CD4-positive, alpha-beta memory T cell (primary cell): ENCODE measurements at regions of chr12 and their contacts with region 1.

Region 1: DNA sequence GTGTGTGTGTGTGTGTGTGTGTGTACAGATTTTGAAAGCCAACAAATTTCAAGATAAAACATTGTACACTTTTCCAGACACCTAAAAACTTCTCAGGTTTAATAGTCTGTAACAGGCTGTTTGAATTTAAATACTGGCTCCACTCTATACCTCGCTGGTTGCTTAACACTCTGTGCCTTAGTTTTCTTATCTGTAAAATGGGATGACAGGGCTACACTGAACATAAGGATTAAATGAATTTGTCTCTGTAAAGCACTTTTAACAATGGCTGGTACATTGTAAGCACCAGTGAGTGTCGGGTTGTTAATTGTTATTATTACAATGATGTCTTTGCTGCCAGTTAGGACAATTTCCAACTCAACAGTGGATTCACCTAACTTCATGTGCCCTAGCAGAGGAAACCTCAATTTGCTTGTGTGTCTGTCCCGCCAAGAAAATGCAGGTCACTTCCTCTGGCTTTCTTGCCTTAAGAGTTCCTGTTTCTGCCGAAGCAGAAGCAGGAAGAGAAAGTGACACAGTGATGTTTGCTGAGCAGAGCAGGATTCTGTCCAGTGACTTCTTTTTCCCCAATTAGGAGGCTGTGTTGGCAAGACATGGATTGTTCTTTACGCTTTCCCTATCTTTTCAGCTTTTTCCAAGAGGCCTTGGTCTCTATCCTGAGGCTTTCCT is 154.0 kb upstream of the ATP2B1 start:
- DNase-seq: peak; percentile 68 to 79 (median 75)
- H3K4me3 ChIP-seq: peak overlapping the region; percentile 26 to 39
- H3K4me3 Mint-ChIP-seq: peak overlapping the region; percentile 69 to 87 (median 82)
- H3K27ac ChIP-seq: peak overlapping the region; percentile 95
- H3K27ac Mint-ChIP-seq: peak overlapping the region; percentile 91 to 99 (median 99)
- H3K4me1 ChIP-seq: peaks cover 62% of the 10 kb centered on the region
- H3K4me1 Mint-ChIP-seq: peaks cover 56 to 81% (median 68%) of the 10 kb centered on the region in 4 donors
- H3K27me3 ChIP-seq: no peaks in the 10 kb centered on the region
- H3K27me3 Mint-ChIP-seq: no peaks in the 10 kb centered on the region

Region 2: DNA sequence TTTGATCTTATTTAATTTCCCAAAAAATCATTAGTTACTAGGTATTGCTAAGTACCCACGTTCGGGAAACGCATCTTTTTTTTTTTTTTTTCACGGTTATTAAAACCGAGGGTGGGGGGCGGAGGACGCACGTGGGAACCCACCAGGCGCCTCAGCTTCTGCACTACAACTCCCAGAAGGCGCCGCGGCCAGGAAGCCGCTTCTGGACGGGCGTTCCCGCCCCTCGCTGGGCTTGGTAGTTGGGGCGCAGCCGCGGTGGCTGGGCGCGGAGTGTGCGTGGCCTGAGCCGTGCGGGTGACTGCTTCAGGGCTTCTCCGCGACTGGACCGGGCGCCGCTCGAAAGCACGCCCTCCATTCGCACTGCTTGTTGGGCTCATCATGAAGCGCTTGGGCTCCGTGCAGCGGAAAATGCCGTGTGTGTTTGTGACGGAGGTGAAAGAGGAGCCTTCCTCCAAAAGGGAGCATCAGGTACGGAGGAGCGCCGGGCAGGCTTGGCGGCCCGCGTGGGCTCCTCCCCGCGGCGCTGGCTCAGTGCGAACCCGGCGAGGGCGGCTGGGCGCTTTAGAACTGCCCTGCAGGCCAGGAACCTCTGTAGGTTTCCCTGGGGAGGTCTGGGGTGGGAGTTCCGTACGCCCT is 1827.3 kb before region 1 on chr12:
- CTCF ChIA-PET with region 1: no interaction called
- POLR2A ChIA-PET with region 1: no interaction called
- intact Hi-C with region 1: no loop called
- DNase-seq: peak; percentile 84 to 89 (median 86)
- H3K4me3 ChIP-seq: peak overlapping the region; percentile 42 to 82
- H3K4me3 Mint-ChIP-seq: peak overlapping the region; percentile 92 to 99 (median 96)
- H3K27ac ChIP-seq: peak overlapping the region; percentile 56
- H3K27ac Mint-ChIP-seq: peak overlapping the region; percentile 85 to 98 (median 95)
- H3K4me1 ChIP-seq: peaks cover 41% of the 10 kb centered on the region
- H3K4me1 Mint-ChIP-seq: peaks cover 33 to 53% (median 45%) of the 10 kb centered on the region in 4 donors
- H3K27me3 ChIP-seq: no peaks in the 10 kb centered on the region
- H3K27me3 Mint-ChIP-seq: no peaks in the 10 kb centered on the region

Region 3: DNA sequence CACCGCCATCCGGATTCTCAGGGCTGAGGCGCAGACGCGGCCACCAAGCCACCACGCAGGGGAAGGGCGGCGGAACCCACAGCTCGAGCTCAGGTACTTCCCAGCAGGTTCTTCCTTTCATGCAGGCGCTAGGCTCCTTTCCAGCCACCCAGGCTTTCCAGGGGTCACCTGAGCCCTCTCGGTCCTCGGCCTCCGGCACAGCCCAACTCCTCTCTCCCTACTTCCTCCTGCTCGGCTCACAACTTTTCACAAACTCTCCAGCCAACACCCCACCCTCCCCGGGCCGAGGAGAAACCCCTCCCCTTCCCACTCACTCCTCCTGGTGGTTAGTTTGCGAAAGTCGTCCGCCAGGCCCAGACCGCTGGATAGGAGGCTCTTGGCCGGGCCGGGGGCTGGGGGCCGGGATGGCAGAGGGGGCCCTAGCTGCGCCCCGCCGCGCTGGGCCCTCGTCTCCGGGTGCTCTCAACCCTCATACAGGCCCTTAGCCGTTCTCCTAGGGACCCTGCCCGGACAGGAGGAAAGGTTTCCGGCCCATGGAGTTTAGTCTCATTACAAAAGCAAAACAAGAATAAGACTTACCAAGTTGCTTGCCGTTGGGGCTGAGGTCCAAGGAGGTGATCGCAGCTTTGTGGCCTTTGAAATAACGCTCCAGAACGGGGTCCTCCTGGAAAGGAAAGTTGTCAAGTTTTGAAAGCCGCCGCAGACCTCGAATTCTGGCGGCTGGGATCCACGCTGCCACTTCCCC is 337.9 kb before region 1 on chr12 and contains the start of gene GALNT4:
- CTCF ChIA-PET with region 1: interaction called, 6 read pairs
- POLR2A ChIA-PET with region 1: interaction called, 10 read pairs
- intact Hi-C with region 1: loop called (anchors 5 kb)
- DNase-seq: peak; percentile 78 to 86 (median 80)
- H3K4me3 ChIP-seq: peak within 1 kb of the TSS; percentile 72 to 93
- H3K4me3 Mint-ChIP-seq: peak within 1 kb of the TSS; percentile 95 to 98 (median 98)
- H3K27ac ChIP-seq: peak within 1 kb of the TSS; percentile 87
- H3K27ac Mint-ChIP-seq: peak within 1 kb of the TSS; percentile 83 to 96 (median 95)
- H3K4me1 ChIP-seq: peaks cover 49% of the 10 kb centered on the region
- H3K4me1 Mint-ChIP-seq: peaks cover 34 to 57% (median 44%) of the 10 kb centered on the region in 4 donors
- H3K27me3 ChIP-seq: no peaks in the 10 kb centered on the region
- H3K27me3 Mint-ChIP-seq: no peaks in the 10 kb centered on the region
- total RNA-seq, gene GALNT4: 7.2 to 7.6 TPM

Region 4: DNA sequence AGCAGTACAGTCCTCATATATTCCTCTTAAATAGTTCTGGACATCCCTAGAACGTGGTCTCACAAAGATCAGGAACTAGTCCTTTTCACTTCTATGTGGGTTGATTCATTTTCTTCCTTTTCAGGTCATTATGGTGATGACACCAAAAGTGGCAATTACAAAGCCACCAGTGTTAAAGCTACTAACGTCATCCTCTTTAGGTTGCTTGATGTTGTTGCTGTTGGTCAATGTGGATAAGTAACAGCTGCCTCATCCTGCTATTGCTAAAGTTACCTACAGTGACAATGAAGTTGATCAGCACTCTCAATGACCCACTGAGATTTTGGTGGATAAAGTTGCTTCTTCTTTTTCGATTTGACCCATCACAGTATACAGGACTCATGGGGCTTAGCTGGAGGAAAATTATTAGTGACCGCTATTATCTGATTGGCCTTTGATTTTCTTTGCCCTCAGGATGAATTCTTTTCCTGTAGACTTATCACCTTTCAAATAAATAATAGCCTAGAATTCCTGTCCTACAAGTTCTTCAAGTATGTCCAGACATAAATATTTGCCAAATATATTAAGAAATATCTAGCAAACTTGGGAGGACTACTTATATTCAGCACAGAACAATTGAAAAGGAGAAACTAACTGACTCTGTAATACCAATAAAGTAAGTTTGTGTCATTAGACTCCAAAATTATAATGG is 100.0 kb before region 1 on chr12:
- CTCF ChIA-PET with region 1: interaction called, 7 read pairs
- POLR2A ChIA-PET with region 1: interaction called, 16 read pairs
- intact Hi-C with region 1: no loop called
- DNase-seq: no peak
- H3K4me3 ChIP-seq: no peak overlapping the region
- H3K4me3 Mint-ChIP-seq: peak overlapping the region in 1 of 8 donors; percentile 15
- H3K27ac ChIP-seq: no peak overlapping the region
- H3K27ac Mint-ChIP-seq: peak overlapping the region in 3 of 7 donors; percentile 9 to 75 (median 29)
- H3K4me1 ChIP-seq: peaks cover 50% of the 10 kb centered on the region
- H3K4me1 Mint-ChIP-seq: peaks cover 43 to 90% (median 59%) of the 10 kb centered on the region in 4 donors
- H3K27me3 ChIP-seq: no peaks in the 10 kb centered on the region
- H3K27me3 Mint-ChIP-seq: no peaks in the 10 kb centered on the region

Region 5: GRCh38 chr12:89882050-89882449 is 19.4 kb after region 1 on chr12:
- CTCF ChIA-PET with region 1: interaction called, 22 read pairs
- POLR2A ChIA-PET with region 1: interaction called, 100 read pairs
- intact Hi-C with region 1: loop called (anchors 1 kb)
- DNase-seq: peak in 1 of 5 donors; percentile 53
- H3K4me3 ChIP-seq: no peak overlapping the region
- H3K4me3 Mint-ChIP-seq: peak overlapping the region in 6 of 8 donors; percentile 18 to 79 (median 58)
- H3K27ac ChIP-seq: peak overlapping the region; percentile 62
- H3K27ac Mint-ChIP-seq: peak overlapping the region; percentile 91 to 98 (median 96)
- H3K4me1 ChIP-seq: peaks cover 65% of the 10 kb centered on the region
- H3K4me1 Mint-ChIP-seq: peaks cover 42 to 67% (median 54%) of the 10 kb centered on the region in 4 donors
- H3K27me3 ChIP-seq: no peaks in the 10 kb centered on the region
- H3K27me3 Mint-ChIP-seq: no peaks in the 10 kb centered on the region

Region 6: DNA sequence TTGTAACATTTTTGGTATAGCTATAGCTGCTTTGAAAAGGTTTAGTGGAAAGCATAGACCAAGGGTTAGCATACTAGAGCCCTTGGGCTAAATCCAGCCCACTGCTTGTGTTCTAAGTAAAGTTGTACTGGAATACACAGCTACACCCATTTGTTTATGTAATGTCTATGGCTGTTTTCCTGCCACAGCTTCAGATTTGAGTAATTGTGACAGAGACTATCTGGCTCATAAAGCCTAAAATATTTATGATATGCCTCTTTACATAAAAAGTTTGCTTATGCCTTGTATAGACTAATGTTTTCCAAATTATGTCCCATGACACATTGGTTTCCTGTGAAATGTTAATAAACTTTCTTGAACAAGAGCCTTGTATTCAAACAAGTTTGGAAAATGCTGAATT is 80.8 kb after region 1 on chr12:
- CTCF ChIA-PET with region 1: no interaction called
- POLR2A ChIA-PET with region 1: interaction called, 99 read pairs
- intact Hi-C with region 1: no loop called
- DNase-seq: no peak
- H3K4me3 ChIP-seq: no peak overlapping the region
- H3K4me3 Mint-ChIP-seq: no peak overlapping the region
- H3K27ac ChIP-seq: peak overlapping the region; percentile 41
- H3K27ac Mint-ChIP-seq: peak overlapping the region; percentile 2 to 97 (median 87)
- H3K4me1 ChIP-seq: peaks cover 38% of the 10 kb centered on the region
- H3K4me1 Mint-ChIP-seq: peaks cover 37 to 58% (median 47%) of the 10 kb centered on the region in 4 donors
- H3K27me3 ChIP-seq: no peaks in the 10 kb centered on the region
- H3K27me3 Mint-ChIP-seq: no peaks in the 10 kb centered on the region

Region 7: GRCh38 chr12:90102957-90103652 is 240.5 kb after region 1 on chr12:
- CTCF ChIA-PET with region 1: interaction called, 3 read pairs
- POLR2A ChIA-PET with region 1: interaction called, 4 read pairs
- intact Hi-C with region 1: loop called (anchors 5 kb)
- DNase-seq: peak in 4 of 5 donors; percentile 42 to 54 (median 52)
- H3K4me3 ChIP-seq: no peak overlapping the region
- H3K4me3 Mint-ChIP-seq: peak overlapping the region; percentile 54 to 83 (median 80)
- H3K27ac ChIP-seq: no peak overlapping the region
- H3K27ac Mint-ChIP-seq: peak overlapping the region in 3 of 7 donors; percentile 5 to 83 (median 78)
- H3K4me1 ChIP-seq: peaks cover 14% of the 10 kb centered on the region
- H3K4me1 Mint-ChIP-seq: peaks cover 14 to 24% (median 15%) of the 10 kb centered on the region in 4 donors
- H3K27me3 ChIP-seq: no peaks in the 10 kb centered on the region
- H3K27me3 Mint-ChIP-seq: peaks cover 0 to 3% of the 10 kb centered on the region in 2 donors

Region 8: GRCh38 chr12:90207799-90208198 is 345.2 kb after region 1 on chr12:
- CTCF ChIA-PET with region 1: no interaction called
- POLR2A ChIA-PET with region 1: no interaction called
- intact Hi-C with region 1: no loop called
- DNase-seq: no peak
- H3K4me3 ChIP-seq: no peak overlapping the region
- H3K4me3 Mint-ChIP-seq: no peak overlapping the region
- H3K27ac ChIP-seq: no peak overlapping the region
- H3K27ac Mint-ChIP-seq: peak overlapping the region in 1 of 7 donors; percentile 7
- H3K4me1 ChIP-seq: no peaks in the 10 kb centered on the region
- H3K4me1 Mint-ChIP-seq: peaks cover 0 to 1% (median 0%) of the 10 kb centered on the region in 4 donors
- H3K27me3 ChIP-seq: no peaks in the 10 kb centered on the region
- H3K27me3 Mint-ChIP-seq: peaks cover 0 to 2% of the 10 kb centered on the region in 2 donors